A673 (cell line): ENCODE measurements at regions of chr4 and their contacts with region 1.

Region 1: DNA sequence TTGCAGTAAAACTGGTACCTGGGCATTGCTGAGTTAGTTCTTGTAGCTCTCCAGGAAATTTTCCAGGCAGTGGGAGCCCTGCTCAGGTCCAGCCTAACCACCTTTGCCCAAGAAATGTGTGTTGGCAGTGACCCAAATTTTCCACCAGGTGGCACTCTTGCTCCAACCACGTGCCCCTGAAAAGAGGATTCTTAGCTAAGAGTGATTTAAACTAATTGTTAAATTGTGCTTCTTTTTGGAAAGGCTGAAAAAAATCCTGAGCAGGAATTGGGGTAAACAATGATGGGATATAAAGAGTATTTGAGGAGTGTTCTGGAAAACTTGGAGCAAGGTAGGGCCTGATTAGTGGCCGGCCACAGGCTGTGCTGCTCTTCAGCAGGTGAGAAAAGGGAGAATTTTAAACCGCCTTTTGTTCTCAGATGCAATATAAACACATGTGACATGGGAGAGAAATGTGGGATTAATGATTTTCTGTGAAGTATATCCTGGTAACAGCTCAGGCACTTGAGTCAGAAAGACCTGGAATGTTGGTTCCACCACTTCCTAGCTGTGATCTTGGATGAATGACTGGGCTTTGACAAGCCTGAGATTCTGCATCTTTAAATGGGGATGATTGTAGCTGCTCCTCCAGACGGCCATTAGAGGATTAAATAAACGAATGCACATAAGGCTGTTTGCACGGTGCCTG is 219.6 kb downstream of the PTTG2 start:
- DNase-seq: peak; percentile 77
- H3K4me3 ChIP-seq: no peak overlapping the region
- H3K27ac ChIP-seq: no peak overlapping the region
- H3K4me1 ChIP-seq: no peaks in the 10 kb centered on the region
- H3K27me3 ChIP-seq: no peaks in the 10 kb centered on the region
- CTCF ChIP-seq: peak; percentile 90

Region 2: GRCh38 chr4:38082424-38083385 is 97.1 kb before region 1 on chr4:
- CTCF ChIA-PET with region 1: no interaction called
- POLR2A ChIA-PET with region 1: no interaction called
- intact Hi-C with region 1: no loop called
- DNase-seq: no peak
- H3K4me3 ChIP-seq: no peak overlapping the region
- H3K27ac ChIP-seq: no peak overlapping the region
- H3K4me1 ChIP-seq: no peaks in the 10 kb centered on the region
- H3K27me3 ChIP-seq: no peaks in the 10 kb centered on the region
- CTCF ChIP-seq: no peak

Region 3: GRCh38 chr4:38160487-38161207 is 19.2 kb before region 1 on chr4:
- CTCF ChIA-PET with region 1: no interaction called
- POLR2A ChIA-PET with region 1: no interaction called
- intact Hi-C with region 1: no loop called
- DNase-seq: peak; percentile 55
- H3K4me3 ChIP-seq: no peak overlapping the region
- H3K27ac ChIP-seq: no peak overlapping the region
- H3K4me1 ChIP-seq: peaks cover 10% of the 10 kb centered on the region
- H3K27me3 ChIP-seq: no peaks in the 10 kb centered on the region
- CTCF ChIP-seq: no peak

Region 4: GRCh38 chr4:38675146-38676121 is 495.6 kb after region 1 on chr4:
- CTCF ChIA-PET with region 1: interaction called, 11 read pairs
- POLR2A ChIA-PET with region 1: no interaction called
- intact Hi-C with region 1: loop called (anchors 1 kb)
- DNase-seq: peak; percentile 89
- H3K4me3 ChIP-seq: no peak overlapping the region
- H3K27ac ChIP-seq: peak overlapping the region; percentile 98
- H3K4me1 ChIP-seq: peaks cover 75% of the 10 kb centered on the region
- H3K27me3 ChIP-seq: no peaks in the 10 kb centered on the region
- CTCF ChIP-seq: peak; percentile 96